A549 (cell line): ENCODE measurements at regions of chr1 and their contacts with region 1.

Region 1: DNA sequence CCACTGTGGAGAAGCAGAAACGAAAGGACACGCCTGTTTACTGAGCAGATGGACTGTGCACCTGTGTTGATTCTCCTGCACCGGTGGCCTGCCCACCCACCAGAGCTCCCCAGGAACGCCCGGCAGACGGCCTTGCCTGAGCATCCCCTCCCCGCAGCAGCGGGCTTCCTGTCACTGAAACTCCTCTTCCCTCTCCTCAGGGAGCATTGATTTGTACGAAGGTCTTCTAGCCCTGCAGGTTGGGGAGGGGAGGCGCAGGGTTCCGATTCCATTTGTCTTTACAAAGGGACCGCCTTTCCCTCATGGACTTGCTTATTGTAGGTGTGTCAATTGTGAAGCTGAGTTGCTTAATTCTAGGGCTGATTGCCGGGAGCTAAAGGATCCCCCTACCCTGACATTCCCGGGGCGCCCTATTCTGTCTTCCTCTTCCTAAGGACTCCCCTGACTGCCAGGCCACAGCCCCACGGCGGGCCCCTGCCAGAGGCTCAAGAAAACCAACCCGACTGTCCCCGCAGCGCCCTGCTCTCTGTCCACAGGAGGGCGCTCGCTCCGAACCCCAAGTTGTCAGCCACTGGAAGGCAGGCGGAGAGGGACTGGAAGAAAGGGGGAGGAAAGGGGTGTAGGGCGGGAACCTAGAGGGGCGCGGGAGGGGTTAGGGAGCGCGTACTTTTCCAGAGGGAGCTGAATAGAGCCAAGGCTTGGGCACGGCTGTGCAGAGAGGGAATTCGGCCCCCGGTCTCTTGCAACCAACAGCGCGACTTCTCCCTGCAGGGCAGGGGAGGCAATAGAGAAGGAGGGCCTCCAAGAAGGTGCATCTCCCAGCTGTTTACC is 2.8 kb downstream of the S100A6 start:
- DNase-seq: peak; percentile 91 to 93
- ATAC-seq: peak; percentile 36 to 63
- H3K4me3 ChIP-seq: peak overlapping the region; percentile 68
- H3K27ac ChIP-seq: peak overlapping the region; percentile 98 to 100
- H3K4me1 ChIP-seq: peaks cover 29% of the 10 kb centered on the region
- CTCF ChIP-seq: peak; percentile 92
- EP300 ChIP-seq: no peak
- POLR2A ChIP-seq: peak; percentile 40
- RAD21 ChIP-seq: peak; percentile 87 to 91

Region 2: DNA sequence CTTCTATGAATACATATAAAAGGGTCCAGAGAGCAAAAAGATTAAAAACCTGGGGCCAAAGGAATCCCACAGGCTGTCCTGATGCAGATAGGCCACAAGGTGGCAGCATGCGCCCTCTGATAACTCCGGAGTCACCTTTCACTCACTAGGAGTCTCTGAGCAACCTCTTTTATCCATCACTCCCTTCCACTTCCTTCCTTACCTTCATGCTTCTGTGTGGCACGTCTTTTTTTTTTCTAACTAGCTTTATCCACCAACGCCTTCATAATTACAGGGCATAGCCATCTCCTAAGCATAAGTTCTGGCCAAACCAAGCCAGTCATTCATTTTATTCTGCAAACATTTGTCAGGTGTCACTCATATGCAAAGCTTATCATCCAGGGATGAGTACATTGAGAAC is 180.5 kb before region 1 on chr1:
- CTCF ChIA-PET with region 1: interaction called, 26 read pairs
- POLR2A ChIA-PET with region 1: no interaction called
- DNase-seq: peak; percentile 69 to 77
- ATAC-seq: peak; percentile 60 to 76; a peak in 5 of 6 replicates
- H3K4me3 ChIP-seq: no peak overlapping the region
- H3K27ac ChIP-seq: no peak overlapping the region
- H3K4me1 ChIP-seq: no peaks in the 10 kb centered on the region
- CTCF ChIP-seq: peak; percentile 94
- EP300 ChIP-seq: no peak
- POLR2A ChIP-seq: no peak
- RAD21 ChIP-seq: peak; percentile 90 to 92

Region 3: GRCh38 chr1:153545067-153546055 is 12.4 kb after region 1 on chr1 and contains the start of gene S100A4:
- CTCF ChIA-PET with region 1: interaction called, 110 read pairs
- POLR2A ChIA-PET with region 1: interaction called, 114 read pairs
- DNase-seq: peak; percentile 94 to 97
- ATAC-seq: peak; percentile 70 to 79
- H3K4me3 ChIP-seq: peak within 1 kb of the TSS; percentile 62
- H3K27ac ChIP-seq: peak within 1 kb of the TSS; percentile 96 to 97
- H3K4me1 ChIP-seq: peaks cover 96% of the 10 kb centered on the region
- CTCF ChIP-seq: no peak
- EP300 ChIP-seq: no peak
- POLR2A ChIP-seq: peak; percentile 85
- RAD21 ChIP-seq: peak; percentile 12 to 24; a peak in 2 of 5 replicates
- polyA plus RNA-seq, gene S100A4: 590 and 814 TPM in 2 replicates

Region 4: DNA sequence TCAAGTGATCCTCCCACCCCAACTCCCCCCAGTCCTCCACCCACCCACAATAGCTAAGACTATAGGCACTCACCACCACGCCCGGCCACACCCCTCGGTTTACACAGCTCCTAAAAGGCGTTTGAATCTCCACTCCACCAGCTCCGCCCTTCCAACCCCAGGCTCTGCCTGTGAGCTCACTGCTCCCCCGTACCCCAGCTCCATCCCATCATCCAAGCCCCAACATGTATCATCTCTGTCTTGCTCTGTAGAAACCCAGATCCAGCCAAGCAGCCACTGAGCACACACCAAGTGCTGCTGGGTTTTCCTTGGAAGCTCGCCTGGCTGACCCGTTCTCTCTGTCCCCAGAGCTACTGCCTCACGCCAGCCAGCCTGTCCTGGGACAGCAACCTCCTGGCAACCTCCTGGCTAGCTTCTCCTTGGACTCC is 44.7 kb after region 1 on chr1:
- CTCF ChIA-PET with region 1: interaction called, 471 read pairs
- POLR2A ChIA-PET with region 1: interaction called, 12 read pairs
- DNase-seq: no peak
- ATAC-seq: peak; percentile 31 to 66; a peak in 3 of 6 replicates
- H3K4me3 ChIP-seq: no peak overlapping the region
- H3K27ac ChIP-seq: peak overlapping the region in 1 of 2 experiments; percentile 69; a peak in 3 of 6 replicates
- H3K4me1 ChIP-seq: peaks cover 26% of the 10 kb centered on the region
- CTCF ChIP-seq: no peak
- EP300 ChIP-seq: no peak
- POLR2A ChIP-seq: no peak
- RAD21 ChIP-seq: no peak

Region 5: DNA sequence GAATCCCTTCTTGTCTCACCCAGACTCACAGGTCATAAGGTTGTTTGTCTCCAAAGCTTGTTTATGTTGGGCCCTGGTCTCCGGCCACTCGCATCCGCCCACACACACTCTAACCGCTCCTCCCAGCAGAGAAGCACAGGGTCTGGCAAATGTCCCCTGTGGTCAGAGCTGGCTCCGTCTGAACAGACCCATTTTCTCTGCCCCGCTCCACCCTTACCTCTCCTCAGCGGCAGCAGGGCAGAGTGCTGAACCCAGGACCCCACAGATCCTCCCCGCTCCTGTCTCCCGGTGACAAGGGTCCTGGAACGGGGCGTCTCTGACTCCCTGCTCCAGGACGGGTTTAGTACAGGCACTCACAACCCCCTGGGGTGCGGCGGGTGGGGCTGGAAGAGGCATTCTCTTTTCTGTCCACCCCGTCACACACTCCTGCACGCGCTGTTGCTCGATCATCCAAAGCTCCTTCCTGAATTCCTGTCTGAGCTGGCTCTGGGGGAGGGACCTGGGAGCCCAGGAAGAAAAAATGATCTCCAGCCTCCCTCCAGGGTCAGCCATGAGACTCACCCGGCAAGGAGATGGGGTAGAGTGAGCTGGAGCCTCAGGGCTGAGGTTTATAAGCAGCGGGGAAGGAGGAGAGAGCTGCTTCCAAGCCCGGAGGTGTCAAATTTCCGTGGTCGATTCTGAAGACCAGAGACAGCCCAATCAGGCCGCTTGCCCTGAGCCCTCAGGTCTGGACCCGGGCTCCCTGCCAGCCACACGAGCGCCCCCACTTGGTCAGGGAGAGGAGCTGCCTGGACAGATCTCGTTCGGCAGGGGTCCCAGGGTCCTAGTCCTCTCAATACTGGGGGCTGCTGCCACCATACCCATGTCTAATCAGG is 94.2 kb after region 1 on chr1 and contains the start of gene S100A13:
- CTCF ChIA-PET with region 1: interaction called, 63 read pairs
- POLR2A ChIA-PET with region 1: interaction called, 4 read pairs
- DNase-seq: peak; percentile 85 to 91
- ATAC-seq: peak; percentile 80 to 87
- H3K4me3 ChIP-seq: peak within 1 kb of the TSS; percentile 57
- H3K27ac ChIP-seq: peak within 1 kb of the TSS; percentile 92
- H3K4me1 ChIP-seq: peaks cover 18% of the 10 kb centered on the region
- CTCF ChIP-seq: peak; percentile 73
- EP300 ChIP-seq: no peak
- POLR2A ChIP-seq: peak; percentile 75
- RAD21 ChIP-seq: peak; percentile 54 to 72
- polyA plus RNA-seq, gene S100A13: 98.9 and 113 TPM in 2 replicates

Region 6: GRCh38 chr1:153649863-153650235 is 116.9 kb after region 1 on chr1:
- CTCF ChIA-PET with region 1: interaction called, 10 read pairs
- POLR2A ChIA-PET with region 1: no interaction called
- DNase-seq: no peak
- ATAC-seq: peak; percentile 47 to 53
- H3K4me3 ChIP-seq: no peak overlapping the region
- H3K27ac ChIP-seq: no peak overlapping the region
- H3K4me1 ChIP-seq: peaks cover 6% of the 10 kb centered on the region; the same call in 1 of the 3 replicates
- CTCF ChIP-seq: no peak
- EP300 ChIP-seq: no peak
- POLR2A ChIP-seq: no peak
- RAD21 ChIP-seq: no peak